PC-3 (cell line): ENCODE measurements at regions of chr1 and their contacts with region 1.

Region 1: GRCh38 chr1:160558660-160559380 is 20.5 kb downstream of the CD84 start:
- DNase-seq: no peak
- ATAC-seq: no peak
- H3K4me3 ChIP-seq: no peak overlapping the region
- H3K27ac ChIP-seq: no peak overlapping the region
- H3K4me1 ChIP-seq: no peaks in the 10 kb centered on the region
- H3K27me3 ChIP-seq: peaks cover 57% of the 10 kb centered on the region
- CTCF ChIP-seq: no peak

Region 2: DNA sequence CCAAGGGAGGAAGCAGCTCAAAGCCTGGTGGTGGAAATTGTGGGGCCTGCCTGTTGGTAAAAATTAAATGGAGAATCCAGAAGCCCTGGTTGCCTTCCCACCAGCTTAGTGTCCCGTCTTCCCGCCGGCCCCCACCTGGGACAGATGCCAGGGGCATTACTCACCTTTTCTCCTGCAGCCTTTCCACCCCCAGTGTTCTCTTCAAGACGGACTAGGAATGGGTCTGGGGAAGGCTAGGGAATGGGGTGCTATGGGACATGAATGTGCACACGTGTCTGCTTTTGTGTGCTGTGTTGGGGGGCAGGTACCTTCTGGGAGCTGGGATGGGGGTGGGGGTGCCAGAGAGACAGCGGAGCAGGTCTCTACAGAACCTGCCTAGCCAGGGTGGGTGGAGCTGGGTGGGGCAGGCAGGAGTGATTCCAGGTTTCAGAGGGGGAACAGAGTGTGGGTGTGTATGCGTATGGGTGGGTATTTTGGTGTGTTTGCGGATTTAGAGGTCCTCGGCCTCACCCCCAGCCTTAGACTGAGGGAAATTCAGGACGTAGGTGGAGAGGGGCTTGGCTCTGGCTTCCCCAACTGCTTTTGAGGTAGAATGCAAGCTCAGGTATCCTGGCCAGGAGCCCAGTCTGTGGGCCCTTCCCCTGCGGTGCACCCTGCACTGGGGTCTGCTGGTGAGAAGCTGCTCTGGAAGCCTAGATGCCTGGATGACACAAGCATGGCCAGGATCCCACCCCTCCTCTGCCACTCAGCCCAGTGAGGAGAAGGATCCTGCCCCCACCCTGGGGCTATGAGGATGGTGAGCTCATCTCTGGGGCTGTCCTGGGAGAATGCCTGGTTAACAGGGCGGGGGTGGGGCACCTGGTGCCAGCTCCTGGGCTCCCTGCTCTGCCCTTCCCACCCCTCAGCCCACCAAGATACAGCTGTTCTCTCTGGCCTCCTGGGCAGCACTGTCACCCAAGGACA is 150.7 kb before region 1 on chr1:
- CTCF ChIA-PET with region 1: interaction called, 13 read pairs
- POLR2A ChIA-PET with region 1: no interaction called
- intact Hi-C with region 1: no loop called
- DNase-seq: peak; percentile 84
- ATAC-seq: peak; percentile 42
- H3K4me3 ChIP-seq: peak overlapping the region; percentile 46; the same call in 1 of the 2 replicates
- H3K27ac ChIP-seq: peak overlapping the region; percentile 59
- H3K4me1 ChIP-seq: peaks cover 25% of the 10 kb centered on the region
- H3K27me3 ChIP-seq: peaks cover 11% of the 10 kb centered on the region
- CTCF ChIP-seq: no peak

Region 3: DNA sequence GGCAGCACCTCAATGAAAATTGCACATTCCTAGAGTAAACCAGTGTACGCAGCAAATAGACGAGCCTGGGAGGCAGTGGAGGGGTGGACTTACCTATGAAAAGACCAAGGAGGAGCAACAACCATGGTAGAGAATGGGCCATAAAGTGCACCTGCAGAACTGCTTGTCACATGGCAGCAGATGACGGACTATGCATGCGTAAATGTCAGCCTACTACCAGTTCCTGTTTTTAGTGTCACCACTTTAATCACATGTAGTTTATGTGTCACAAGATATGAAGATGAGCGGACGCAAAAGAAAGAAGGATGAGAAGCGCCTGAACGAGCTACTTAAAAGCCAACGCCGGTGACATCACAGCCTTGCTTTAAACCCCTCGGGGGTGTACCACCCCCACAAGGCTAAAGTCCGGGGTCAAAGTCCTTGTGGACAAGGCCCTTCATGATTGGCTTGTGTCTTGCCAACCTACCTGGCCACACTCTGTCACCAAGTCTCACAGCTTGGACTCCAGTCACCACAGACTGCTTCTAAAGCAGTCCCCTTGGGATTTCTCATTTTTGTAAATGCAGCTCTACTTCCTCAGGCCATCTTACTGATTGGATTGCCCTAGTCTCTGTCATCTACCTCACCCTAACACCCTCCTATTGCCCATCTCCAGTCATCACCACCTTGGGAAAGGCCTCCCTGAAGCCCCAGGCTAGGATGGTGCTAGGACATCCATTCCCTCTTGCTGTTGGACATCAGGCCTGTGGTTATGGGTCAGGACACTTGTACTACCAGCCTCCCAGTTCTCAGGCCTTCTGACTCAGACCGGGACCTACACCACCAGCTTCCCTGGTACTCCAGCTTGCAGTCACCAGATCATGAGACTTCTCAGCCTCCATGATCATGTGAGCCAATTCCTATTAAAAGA is 231.1 kb after region 1 on chr1:
- CTCF ChIA-PET with region 1: no interaction called
- POLR2A ChIA-PET with region 1: no interaction called
- intact Hi-C with region 1: no loop called
- DNase-seq: no peak
- ATAC-seq: no peak
- H3K4me3 ChIP-seq: no peak overlapping the region
- H3K27ac ChIP-seq: no peak overlapping the region
- H3K4me1 ChIP-seq: no peaks in the 10 kb centered on the region
- H3K27me3 ChIP-seq: no peaks in the 10 kb centered on the region
- CTCF ChIP-seq: no peak

Region 4: DNA sequence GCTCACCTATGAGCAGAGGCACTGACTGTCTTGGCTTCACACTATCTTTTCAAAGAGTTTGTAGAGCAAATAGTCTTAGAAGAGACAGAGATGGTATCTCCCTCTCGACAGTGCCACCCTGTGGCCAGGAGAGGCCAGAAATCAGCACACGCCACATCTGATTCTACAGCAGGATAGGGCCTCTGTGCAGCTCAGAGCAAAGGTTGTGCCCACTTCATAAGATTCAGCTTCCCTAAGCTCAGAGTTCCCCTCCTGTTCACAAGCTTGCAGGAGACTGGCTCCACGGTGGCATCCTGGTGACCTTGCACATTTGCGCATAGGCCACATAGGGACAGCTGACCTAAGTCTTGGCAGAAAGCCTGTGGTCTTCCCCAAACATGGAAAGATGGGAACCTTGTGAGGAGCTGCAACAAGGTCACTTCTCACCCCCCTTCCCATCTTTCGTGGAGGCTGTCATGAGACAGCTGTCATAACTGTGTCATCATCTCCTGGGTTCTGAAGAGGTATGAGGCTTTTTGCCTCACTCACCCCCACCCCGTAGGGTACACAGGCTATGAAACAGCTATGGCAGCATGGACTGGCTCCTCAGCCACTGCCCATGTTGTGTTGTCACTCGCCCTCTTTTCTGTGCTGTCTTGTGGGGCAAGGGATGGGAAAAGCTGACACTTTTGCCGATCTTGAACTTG is 392.8 kb after region 1 on chr1:
- CTCF ChIA-PET with region 1: no interaction called
- POLR2A ChIA-PET with region 1: no interaction called
- intact Hi-C with region 1: no loop called
- DNase-seq: peak; percentile 91
- ATAC-seq: peak; percentile 77
- H3K4me3 ChIP-seq: no peak overlapping the region
- H3K27ac ChIP-seq: no peak overlapping the region
- H3K4me1 ChIP-seq: peaks cover 25% of the 10 kb centered on the region
- H3K27me3 ChIP-seq: no peaks in the 10 kb centered on the region
- CTCF ChIP-seq: peak; percentile 98